MCF 10A (cell line): ENCODE measurements at regions of chr9 and their contacts with region 1.

Region 1: DNA sequence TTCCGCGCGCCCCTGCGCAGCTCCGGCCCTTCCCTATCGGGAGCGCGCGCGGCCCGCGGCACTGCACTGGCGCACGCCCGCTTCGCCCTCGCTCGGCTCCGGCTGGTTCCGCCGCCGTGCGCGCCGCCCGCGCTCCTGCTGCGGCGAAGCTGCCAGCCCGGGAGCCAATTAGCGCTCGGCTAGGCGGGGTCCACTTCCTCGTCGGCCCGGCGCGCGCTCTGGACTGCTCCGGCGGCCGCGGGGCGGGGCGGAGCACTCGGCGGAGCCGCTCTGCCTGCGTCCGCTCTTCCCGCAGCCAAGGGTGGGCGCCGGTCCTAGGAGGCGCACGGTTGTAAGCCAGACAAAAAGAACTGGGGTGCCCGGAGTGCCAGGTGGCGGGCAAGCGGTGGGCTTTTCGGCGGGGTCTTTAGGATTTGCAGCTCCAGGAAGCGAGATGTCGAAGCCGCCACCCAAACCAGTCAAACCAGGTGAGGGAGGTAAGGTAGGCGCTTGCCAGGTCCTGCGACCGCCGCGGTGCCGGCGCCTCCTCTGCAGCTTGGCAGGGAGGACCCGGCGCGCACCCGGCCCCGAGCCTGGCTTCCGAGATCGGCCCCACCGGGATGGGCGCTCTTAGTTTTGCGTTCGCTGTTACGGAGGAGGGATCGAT is at the start of gene OSTF1:
- DNase-seq: peak; percentile 95
- H3K4me3 Mint-ChIP-seq: peak within 1 kb of the TSS; percentile 99
- H3K27ac Mint-ChIP-seq: peak within 1 kb of the TSS; percentile 97
- H3K4me1 Mint-ChIP-seq: peaks cover 25% of the 10 kb centered on the region
- H3K27me3 Mint-ChIP-seq: no peaks in the 10 kb centered on the region
- CTCF ChIP-seq: no peak
- total RNA-seq, gene OSTF1: 18.3 and 21.1 TPM in 2 replicates

Region 2: DNA sequence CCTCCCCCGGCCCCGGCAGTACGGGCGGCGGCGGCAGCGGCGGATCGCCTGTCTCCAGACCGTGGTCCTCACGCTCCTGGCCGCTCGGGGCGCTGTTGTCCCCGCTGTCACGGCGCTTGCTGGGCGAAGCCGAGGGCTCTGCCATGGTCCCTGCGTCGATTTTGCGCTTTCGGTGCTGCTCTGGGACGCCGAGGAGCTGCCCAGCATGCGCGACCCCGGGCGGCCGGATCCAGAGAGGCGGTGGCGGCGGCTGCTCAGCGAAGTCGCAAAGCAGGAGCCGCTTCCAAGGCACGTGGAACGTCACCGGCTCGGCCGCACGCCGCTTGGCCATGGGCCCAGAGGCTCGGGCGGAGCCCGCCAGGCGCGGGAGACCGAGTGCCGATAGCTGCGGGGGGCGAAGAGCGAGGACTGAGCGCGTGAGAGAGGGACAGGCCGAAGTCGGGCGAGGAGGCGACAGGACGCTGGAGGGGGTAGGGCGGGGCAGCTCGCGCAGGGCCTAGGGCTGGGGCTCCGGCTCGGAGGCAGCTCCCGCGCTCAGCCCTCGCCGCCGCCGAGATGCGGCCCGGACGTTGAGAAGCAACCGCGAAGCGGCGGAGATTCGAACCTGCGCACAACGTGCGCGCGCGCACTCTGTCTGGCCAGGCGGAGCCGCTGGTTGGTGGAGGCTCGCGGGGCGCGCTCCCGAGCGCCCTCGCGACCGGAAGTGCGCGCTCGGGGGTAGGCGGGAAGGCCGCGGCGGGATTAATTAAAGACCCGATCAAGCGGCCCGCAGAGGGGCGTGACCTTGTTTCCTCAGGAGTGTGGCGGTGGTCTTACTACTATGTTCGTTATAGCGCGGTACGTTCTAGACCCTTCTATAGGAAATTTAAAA is 135.9 kb before region 1 on chr9 and contains the start of gene C9orf40:
- CTCF ChIA-PET with region 1: interaction called, 6 read pairs
- POLR2A ChIA-PET with region 1: interaction called, 17 read pairs
- intact Hi-C with region 1: no loop called
- DNase-seq: peak; percentile 82
- H3K4me3 Mint-ChIP-seq: peak within 1 kb of the TSS; percentile 88
- H3K27ac Mint-ChIP-seq: peak within 1 kb of the TSS; percentile 92
- H3K4me1 Mint-ChIP-seq: peaks cover 9% of the 10 kb centered on the region
- H3K27me3 Mint-ChIP-seq: no peaks in the 10 kb centered on the region
- CTCF ChIP-seq: peak; percentile 69
- total RNA-seq, gene C9orf40: 5.6 and 5.8 TPM in 2 replicates

Region 3: GRCh38 chr9:75064307-75065025 is 23.9 kb before region 1 on chr9:
- CTCF ChIA-PET with region 1: interaction called, 3 read pairs
- POLR2A ChIA-PET with region 1: interaction called, 11 read pairs
- intact Hi-C with region 1: no loop called
- DNase-seq: no peak
- H3K4me3 Mint-ChIP-seq: no peak overlapping the region
- H3K27ac Mint-ChIP-seq: peak overlapping the region; percentile 49
- H3K4me1 Mint-ChIP-seq: no peaks in the 10 kb centered on the region
- H3K27me3 Mint-ChIP-seq: no peaks in the 10 kb centered on the region
- CTCF ChIP-seq: no peak

Region 4: DNA sequence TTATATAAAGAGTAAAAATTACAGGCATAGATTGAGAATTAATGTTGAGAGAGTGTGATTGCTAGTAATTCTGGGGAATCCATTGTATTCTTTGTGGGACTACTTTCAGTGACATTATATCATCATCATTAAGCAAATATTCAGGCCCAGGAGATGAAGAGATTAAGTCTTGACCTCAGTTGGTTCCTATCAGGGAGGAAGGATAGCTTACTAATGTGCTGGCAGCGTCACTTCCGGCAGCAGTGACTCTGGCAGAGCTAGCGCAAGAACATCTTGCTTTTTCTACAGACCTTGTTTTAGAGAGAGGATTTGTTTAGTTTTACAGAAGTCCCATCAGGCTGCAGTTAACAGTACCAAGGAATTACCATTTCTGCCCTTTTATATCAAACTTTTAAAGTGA is 20.2 kb after region 1 on chr9:
- CTCF ChIA-PET with region 1: interaction called, 3 read pairs
- POLR2A ChIA-PET with region 1: interaction called, 48 read pairs
- intact Hi-C with region 1: no loop called
- DNase-seq: no peak
- H3K4me3 Mint-ChIP-seq: no peak overlapping the region
- H3K27ac Mint-ChIP-seq: peak overlapping the region; percentile 35
- H3K4me1 Mint-ChIP-seq: peaks cover 16% of the 10 kb centered on the region
- H3K27me3 Mint-ChIP-seq: no peaks in the 10 kb centered on the region
- CTCF ChIP-seq: no peak

Region 5: DNA sequence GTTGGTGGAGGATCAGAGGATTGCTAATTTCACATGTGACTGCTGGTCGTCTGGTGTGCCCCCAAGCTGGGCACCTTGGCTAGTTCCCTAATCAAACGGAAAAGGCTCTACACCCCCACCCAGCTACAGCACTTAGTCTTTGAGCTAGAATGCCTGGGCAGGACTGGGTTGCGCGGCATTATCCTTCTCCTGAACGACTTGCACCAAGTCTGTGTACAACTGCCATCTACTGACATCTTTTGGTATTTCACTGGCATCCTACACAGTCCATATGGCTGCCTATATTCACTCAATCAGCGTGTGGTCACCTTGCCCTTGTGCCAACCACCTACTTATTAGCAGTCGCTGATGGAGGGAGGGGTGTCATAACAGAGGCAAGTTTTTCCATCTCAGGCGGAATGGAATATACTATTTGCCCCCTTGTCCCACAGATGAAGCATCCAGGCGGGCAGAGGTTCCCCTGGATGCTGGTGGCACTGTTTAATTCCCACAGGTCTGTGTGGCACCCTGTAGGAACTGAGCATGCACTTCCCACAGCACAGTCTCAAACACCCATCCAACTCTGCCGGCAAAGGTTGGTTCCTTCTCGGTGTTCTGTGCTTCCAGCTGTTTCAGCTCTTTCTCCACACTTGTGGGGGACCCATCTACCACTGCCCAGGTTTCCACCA is 150.1 kb after region 1 on chr9:
- CTCF ChIA-PET with region 1: interaction called, 3 read pairs
- POLR2A ChIA-PET with region 1: interaction called, 4 read pairs
- intact Hi-C with region 1: loop called (anchors 5 kb)
- DNase-seq: peak; percentile 89
- H3K4me3 Mint-ChIP-seq: no peak overlapping the region
- H3K27ac Mint-ChIP-seq: no peak overlapping the region
- H3K4me1 Mint-ChIP-seq: peaks cover 18% of the 10 kb centered on the region
- H3K27me3 Mint-ChIP-seq: no peaks in the 10 kb centered on the region
- CTCF ChIP-seq: peak; percentile 72